Astrocyte of the cerebellum (primary cell): ENCODE measurements at regions of chr4 and their contacts with region 1.

Region 1: GRCh38 chr4:168426350-168426749 is 53.9 kb downstream of the DDX60L start:
- DNase-seq: no peak
- H3K4me3 ChIP-seq: no peak overlapping the region
- CTCF ChIP-seq: no peak

Region 2: DNA sequence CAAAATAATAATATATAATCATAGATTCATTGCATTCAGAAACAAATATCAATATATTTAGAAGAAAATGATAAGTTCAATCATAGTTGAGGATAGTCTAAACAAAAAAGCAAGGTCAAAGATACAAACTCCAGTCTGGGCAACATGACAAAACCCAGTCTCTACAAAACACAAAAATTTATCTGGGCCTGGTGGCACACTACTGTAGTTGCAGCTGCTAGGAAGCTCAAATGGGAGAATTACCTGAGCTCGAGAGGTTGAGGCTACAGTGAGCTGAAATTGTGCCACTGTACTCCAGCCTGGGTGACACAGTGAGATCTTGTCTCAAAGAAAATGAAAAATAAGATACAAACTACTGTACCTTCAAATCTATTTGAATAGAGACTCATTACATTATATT is 386.8 kb before region 1 on chr4:
- in situ Hi-C with region 1: no loop called
- DNase-seq: no peak
- H3K4me3 ChIP-seq: no peak overlapping the region
- CTCF ChIP-seq: no peak

Region 3: GRCh38 chr4:168318266-168318895 is 108.0 kb before region 1 on chr4 and contains the start of gene DDX60:
- in situ Hi-C with region 1: no loop called
- DNase-seq: peak; percentile 55
- H3K4me3 ChIP-seq: peak within 1 kb of the TSS; percentile 89
- CTCF ChIP-seq: peak; percentile 14

Region 4: DNA sequence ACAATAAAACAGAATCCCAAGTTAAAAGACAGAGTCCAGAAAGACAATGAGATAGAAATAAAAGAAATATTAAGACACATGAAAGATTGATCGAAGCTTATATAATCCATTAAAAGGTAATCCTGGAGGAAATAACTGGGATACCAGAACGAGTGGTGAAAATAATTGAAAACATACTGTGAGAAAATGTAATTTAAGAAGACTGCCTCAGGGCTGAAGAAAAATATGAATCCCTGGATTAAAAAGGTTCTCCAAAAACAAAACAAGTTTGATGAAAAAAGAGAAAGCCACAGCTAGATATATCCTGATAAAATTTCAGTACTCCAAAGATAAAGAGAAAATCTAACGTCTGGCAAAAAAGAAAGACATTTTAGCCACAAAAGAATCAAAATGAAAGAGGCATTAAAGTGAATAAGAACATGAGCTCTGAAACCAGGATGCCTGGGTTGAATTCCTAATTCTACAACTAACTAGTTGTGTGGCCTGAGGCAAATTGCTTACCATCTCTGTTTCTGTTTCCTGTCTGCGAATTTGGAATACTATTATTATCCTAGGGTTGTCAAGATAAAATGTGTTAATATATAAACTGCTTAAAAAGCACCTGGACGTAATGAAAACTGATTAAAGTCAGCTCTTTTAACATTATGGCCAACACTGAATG is 48.4 kb after region 1 on chr4:
- in situ Hi-C with region 1: loop called (anchors 5 kb)
- DNase-seq: no peak
- H3K4me3 ChIP-seq: no peak overlapping the region
- CTCF ChIP-seq: no peak

Region 5: GRCh38 chr4:168503652-168504362 is 77.5 kb after region 1 on chr4:
- in situ Hi-C with region 1: no loop called
- DNase-seq: no peak
- H3K4me3 ChIP-seq: no peak overlapping the region
- CTCF ChIP-seq: no peak